Right cardiac atrium (tissue), 5 donors: ENCODE measurements at regions of chr1 and their contacts with region 1.

Region 1: DNA sequence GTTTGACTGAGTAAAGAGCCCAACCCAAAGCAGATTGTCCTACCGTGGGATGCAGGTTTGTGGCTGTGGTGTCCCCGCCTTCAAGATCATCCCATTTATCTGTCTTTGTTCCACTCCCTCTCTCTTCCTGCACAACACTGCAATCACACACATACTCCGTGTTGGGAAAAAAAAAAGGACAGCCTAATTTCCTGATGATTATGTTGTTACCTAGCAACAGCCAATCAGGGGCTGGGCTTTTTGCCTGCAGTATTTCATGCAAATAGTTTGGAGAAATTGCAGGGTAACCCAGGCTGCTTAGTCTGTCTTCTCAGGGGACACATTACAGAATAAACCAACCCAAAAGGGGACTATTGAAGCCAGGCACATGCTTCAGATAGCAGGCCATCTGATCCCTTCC is 38.3 kb downstream of the PHC2 start:
- DNase-seq: no peak
- ATAC-seq: no peak
- H3K4me3 ChIP-seq: no peak overlapping the region
- H3K27ac ChIP-seq: no peak overlapping the region
- H3K4me1 ChIP-seq: no peaks in the 10 kb centered on the region
- H3K27me3 ChIP-seq: no peaks in the 10 kb centered on the region

Region 2: GRCh38 chr1:33443080-33443704 is 50.6 kb after region 1 on chr1:
- intact Hi-C with region 1: loop called in 1 of 4 experiments (anchors 10 kb)
- DNase-seq: no peak
- ATAC-seq: no peak
- H3K4me3 ChIP-seq: no peak overlapping the region
- H3K27ac ChIP-seq: peak overlapping the region; percentile 25
- H3K4me1 ChIP-seq: peaks cover 5% of the 10 kb centered on the region
- H3K27me3 ChIP-seq: no peaks in the 10 kb centered on the region

Region 3: DNA sequence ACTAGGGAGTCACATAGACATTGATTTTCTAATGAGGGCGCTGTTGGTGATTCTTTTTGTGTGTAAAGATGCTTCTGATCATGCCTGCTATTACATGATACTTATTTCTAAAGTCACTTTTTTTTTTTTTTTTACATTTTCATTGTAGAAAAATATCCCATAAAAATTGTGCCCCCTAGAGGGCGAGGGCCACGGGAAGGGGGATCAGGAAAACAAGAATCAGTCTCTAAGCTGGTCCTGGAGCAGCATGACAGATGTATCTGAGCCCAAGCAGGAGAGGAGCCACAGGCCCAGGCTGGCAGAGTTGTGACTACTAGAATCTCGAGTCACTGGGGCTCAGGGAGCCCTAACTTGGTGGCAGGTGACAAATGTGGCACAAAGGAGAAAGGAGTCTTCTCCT is 107.9 kb after region 1 on chr1:
- intact Hi-C with region 1: no loop called
- DNase-seq: no peak
- ATAC-seq: no peak
- H3K4me3 ChIP-seq: no peak overlapping the region
- H3K27ac ChIP-seq: no peak overlapping the region
- H3K4me1 ChIP-seq: no peaks in the 10 kb centered on the region
- H3K27me3 ChIP-seq: no peaks in the 10 kb centered on the region